HCT116 (cell line): ENCODE measurements at regions of chr19 and their contacts with region 1.

Region 1: GRCh38 chr19:53365134-53365898 is at the start of gene ZNF525:
- DNase-seq: peak; percentile 75
- ATAC-seq: peak; percentile 100
- H3K4me3 ChIP-seq: peak within 1 kb of the TSS; percentile 66 to 86
- H3K27ac ChIP-seq: peak within 1 kb of the TSS; percentile 53
- H3K4me1 ChIP-seq: peaks cover 0 to 4% of the 10 kb centered on the region in 2 experiments; a peak in 1 of 4 replicates
- H3K27me3 ChIP-seq: no peaks in the 10 kb centered on the region
- CTCF ChIP-seq: peak in 2 of 3 experiments; percentile 18 to 30; a peak in 1 of 6 replicates
- POLR2A ChIP-seq: no peak
- RAD21 ChIP-seq: no peak
- total RNA-seq, gene ZNF525: 10.2 TPM

Region 2: GRCh38 chr19:53195265-53195903 is 169.9 kb before region 1 on chr19:
- CTCF ChIA-PET with region 1: no interaction called
- POLR2A ChIA-PET with region 1: no interaction called
- RAD21 ChIA-PET with region 1: no interaction called
- intact Hi-C with region 1: loop called (anchors 10 kb)
- DNase-seq: peak; percentile 42
- ATAC-seq: peak; percentile 54; the same call in 1 of the 2 replicates
- H3K4me3 ChIP-seq: no peak overlapping the region
- H3K27ac ChIP-seq: no peak overlapping the region
- H3K4me1 ChIP-seq: no peaks in the 10 kb centered on the region
- H3K27me3 ChIP-seq: no peaks in the 10 kb centered on the region
- CTCF ChIP-seq: peak; percentile 45 to 83 (median 81); a peak in 5 of 6 replicates
- POLR2A ChIP-seq: no peak
- RAD21 ChIP-seq: peak; percentile 75

Region 3: GRCh38 chr19:53333463-53334449 is 31.6 kb before region 1 on chr19 and contains the start of gene ZNF845:
- CTCF ChIA-PET with region 1: no interaction called
- POLR2A ChIA-PET with region 1: no interaction called
- RAD21 ChIA-PET with region 1: no interaction called
- intact Hi-C with region 1: loop called (anchors 5 kb)
- DNase-seq: peak; percentile 60
- ATAC-seq: peak; percentile 97
- H3K4me3 ChIP-seq: peak within 1 kb of the TSS; percentile 64 to 70
- H3K27ac ChIP-seq: peak within 1 kb of the TSS; percentile 59
- H3K4me1 ChIP-seq: peaks cover 0 to 9% of the 10 kb centered on the region in 2 experiments; a peak in 1 of 4 replicates
- H3K27me3 ChIP-seq: no peaks in the 10 kb centered on the region
- CTCF ChIP-seq: no peak
- POLR2A ChIP-seq: no peak
- RAD21 ChIP-seq: no peak
- total RNA-seq, gene ZNF845: 5.4 TPM

Region 4: GRCh38 chr19:53394974-53395839 is 29.9 kb after region 1 on chr19 and contains the start of gene ZNF765:
- CTCF ChIA-PET with region 1: no interaction called
- POLR2A ChIA-PET with region 1: no interaction called
- RAD21 ChIA-PET with region 1: no interaction called
- intact Hi-C with region 1: loop called (anchors 5 kb)
- DNase-seq: peak; percentile 68
- ATAC-seq: peak; percentile 98
- H3K4me3 ChIP-seq: peak within 1 kb of the TSS; percentile 84 to 85
- H3K27ac ChIP-seq: peak within 1 kb of the TSS; percentile 52
- H3K4me1 ChIP-seq: peaks cover 0 to 4% of the 10 kb centered on the region in 2 experiments; a peak in 1 of 4 replicates
- H3K27me3 ChIP-seq: no peaks in the 10 kb centered on the region
- CTCF ChIP-seq: peak in 2 of 3 experiments; percentile 19 to 30; a peak in 3 of 6 replicates
- POLR2A ChIP-seq: no peak
- RAD21 ChIP-seq: no peak
- total RNA-seq, gene ZNF765: 6.7 TPM

Region 5: GRCh38 chr19:53455828-53456227 is 90.5 kb after region 1 on chr19:
- CTCF ChIA-PET with region 1: no interaction called
- POLR2A ChIA-PET with region 1: no interaction called
- RAD21 ChIA-PET with region 1: no interaction called
- intact Hi-C with region 1: no loop called
- DNase-seq: no peak
- ATAC-seq: no peak
- H3K4me3 ChIP-seq: no peak overlapping the region
- H3K27ac ChIP-seq: no peak overlapping the region
- H3K4me1 ChIP-seq: no peaks in the 10 kb centered on the region
- H3K27me3 ChIP-seq: no peaks in the 10 kb centered on the region
- CTCF ChIP-seq: no peak
- POLR2A ChIP-seq: no peak
- RAD21 ChIP-seq: no peak